Gastrocnemius medialis (tissue), 4 donors: ENCODE measurements at regions of chr7 and their contacts with region 1.

Region 1: GRCh38 chr7:135977007-135977741 is at the start of gene MTPN:
- DNase-seq: peak; percentile 97 to 98
- ATAC-seq: peak; percentile 99
- H3K4me3 ChIP-seq: peak within 1 kb of the TSS; percentile 85 to 99 (median 92)
- H3K27ac ChIP-seq: peak within 1 kb of the TSS; percentile 89 to 96 (median 92)
- H3K4me1 ChIP-seq: peaks cover 30 to 43% of the 10 kb centered on the region in 2 donors
- H3K27me3 ChIP-seq: no peaks in the 10 kb centered on the region
- CTCF ChIP-seq: no peak
- POLR2A ChIP-seq: peak; percentile 76 to 77
- total RNA-seq, gene MTPN: 48.5 to 94.2 (median 58.7) TPM

Region 2: GRCh38 chr7:135406918-135407317 is 570.3 kb before region 1 on chr7:
- in situ Hi-C with region 1: no loop called
- intact Hi-C with region 1: loop called (anchors 10 kb)
- DNase-seq: no peak
- ATAC-seq: no peak
- H3K4me3 ChIP-seq: no peak overlapping the region
- H3K27ac ChIP-seq: no peak overlapping the region
- H3K4me1 ChIP-seq: peaks cover 0 to 5% of the 10 kb centered on the region in 2 donors
- H3K27me3 ChIP-seq: no peaks in the 10 kb centered on the region
- CTCF ChIP-seq: no peak
- POLR2A ChIP-seq: no peak

Region 3: DNA sequence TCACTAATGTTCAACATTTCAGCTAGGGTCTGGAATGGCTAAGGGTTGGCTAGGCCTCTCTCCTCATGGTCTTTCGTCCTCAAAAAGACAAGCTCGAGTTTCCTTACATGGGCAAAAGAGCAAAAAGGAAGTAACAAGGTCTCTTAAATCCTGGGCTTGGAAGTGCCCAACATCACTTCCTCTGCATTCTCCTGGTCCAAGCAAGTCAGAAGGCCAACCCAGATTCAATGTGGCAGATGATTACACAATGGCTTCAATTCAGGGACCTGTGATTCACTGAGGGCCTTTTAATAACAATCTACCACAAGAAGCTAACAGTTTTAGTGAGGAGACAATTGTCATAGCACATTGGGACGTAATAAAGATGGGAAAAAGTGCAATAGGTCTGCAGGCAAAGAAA is 423.8 kb before region 1 on chr7:
- in situ Hi-C with region 1: no loop called
- intact Hi-C with region 1: no loop called
- DNase-seq: no peak
- ATAC-seq: no peak
- H3K4me3 ChIP-seq: no peak overlapping the region
- H3K27ac ChIP-seq: no peak overlapping the region
- H3K4me1 ChIP-seq: peaks cover 0 to 4% of the 10 kb centered on the region in 2 donors
- H3K27me3 ChIP-seq: no peaks in the 10 kb centered on the region
- CTCF ChIP-seq: no peak
- POLR2A ChIP-seq: no peak

Region 4: DNA sequence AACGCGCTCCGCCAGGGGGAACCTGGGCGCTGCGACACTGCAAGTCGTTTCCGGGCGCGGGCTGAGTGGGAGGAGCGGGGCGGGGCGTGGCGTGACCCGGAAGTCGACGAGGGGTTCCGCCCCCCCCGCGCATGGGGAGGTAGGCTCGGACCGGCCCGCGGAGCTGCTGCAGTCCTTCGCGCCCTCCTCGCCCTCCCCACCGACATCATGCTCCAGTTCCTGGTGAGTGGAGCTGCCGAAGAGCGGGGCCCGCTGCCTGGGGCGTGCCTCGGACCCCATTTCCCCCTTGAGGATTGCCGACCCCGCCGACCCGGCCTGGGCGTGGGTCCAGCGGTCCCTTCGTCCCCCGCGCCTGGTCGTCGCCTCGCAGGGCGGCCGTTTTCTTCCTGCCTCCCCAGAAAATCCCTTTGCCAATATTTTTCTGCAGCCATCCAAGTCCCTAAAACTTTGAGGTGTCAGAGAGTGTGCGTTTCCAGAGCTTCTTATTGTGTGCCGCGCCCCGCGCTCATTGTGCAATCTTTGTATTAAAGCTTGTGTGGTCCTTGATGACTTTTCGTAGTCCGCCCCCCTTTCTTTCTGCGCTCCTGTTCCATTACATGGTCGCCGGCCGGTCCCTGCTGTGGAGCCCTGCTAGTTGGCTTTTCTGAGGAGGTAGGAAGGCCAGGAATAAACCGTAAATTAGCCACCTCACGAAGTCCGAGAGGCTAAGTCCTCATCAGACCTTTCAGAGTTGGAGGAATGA is 314.6 kb before region 1 on chr7 and contains the start of gene STMP1:
- in situ Hi-C with region 1: loop called in 1 of 4 experiments (anchors 10 kb)
- intact Hi-C with region 1: loop called (anchors 1 kb)
- DNase-seq: peak; percentile 93 to 95
- ATAC-seq: peak; percentile 93 to 94
- H3K4me3 ChIP-seq: peak within 1 kb of the TSS; percentile 81 to 100 (median 90)
- H3K27ac ChIP-seq: peak within 1 kb of the TSS; percentile 91 to 99 (median 94)
- H3K4me1 ChIP-seq: peaks cover 35 to 47% of the 10 kb centered on the region in 2 donors
- H3K27me3 ChIP-seq: no peaks in the 10 kb centered on the region
- CTCF ChIP-seq: peak in 2 of 5 experiments; percentile 87 to 91
- POLR2A ChIP-seq: peak; percentile 90 to 93
- total RNA-seq, gene STMP1: 7.7 to 19.9 (median 11.8) TPM

Region 5: DNA sequence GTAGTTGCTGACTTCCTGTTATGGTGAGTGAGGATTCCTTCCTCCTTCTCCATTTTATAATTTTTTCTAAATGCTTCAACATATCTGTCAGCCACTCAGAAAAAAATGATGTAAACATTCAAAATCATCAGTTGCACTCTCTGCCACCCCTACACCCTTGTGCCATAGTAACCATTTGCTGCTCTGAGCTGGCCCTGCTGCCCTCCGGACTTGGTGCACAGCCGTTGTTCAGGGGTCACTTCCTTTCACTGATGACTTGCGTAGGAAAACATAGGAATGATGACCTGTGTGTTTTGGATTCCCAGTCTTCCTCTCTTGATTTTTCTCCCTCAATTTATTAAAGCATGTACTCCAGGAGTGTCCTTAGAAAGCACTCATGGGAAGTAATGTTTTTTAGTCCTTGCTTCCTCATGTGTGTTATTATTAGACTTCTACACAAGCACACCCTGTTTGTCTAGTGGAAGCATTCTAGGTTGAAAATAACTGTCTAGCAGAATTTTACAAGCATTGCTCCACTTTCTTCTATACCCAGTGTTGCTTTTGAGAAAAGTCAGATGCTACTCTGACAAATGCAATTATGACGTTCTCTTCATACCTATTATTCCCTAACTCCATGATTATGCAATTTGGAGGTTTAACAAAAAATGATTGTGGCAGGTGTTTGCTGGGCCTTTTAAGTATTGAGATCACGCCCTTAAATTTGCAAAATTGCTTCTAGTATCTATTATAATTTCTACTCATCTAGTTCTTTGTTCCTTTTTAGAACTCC is 62.6 kb after region 1 on chr7:
- in situ Hi-C with region 1: no loop called
- intact Hi-C with region 1: loop called (anchors 5 kb)
- DNase-seq: no peak
- ATAC-seq: no peak
- H3K4me3 ChIP-seq: no peak overlapping the region
- H3K27ac ChIP-seq: no peak overlapping the region
- H3K4me1 ChIP-seq: peaks cover 14 to 23% of the 10 kb centered on the region in 2 donors
- H3K27me3 ChIP-seq: no peaks in the 10 kb centered on the region
- CTCF ChIP-seq: no peak
- POLR2A ChIP-seq: no peak